PC-3 (cell line): ENCODE measurements at regions of chr11 and their contacts with region 1.

Region 1: DNA sequence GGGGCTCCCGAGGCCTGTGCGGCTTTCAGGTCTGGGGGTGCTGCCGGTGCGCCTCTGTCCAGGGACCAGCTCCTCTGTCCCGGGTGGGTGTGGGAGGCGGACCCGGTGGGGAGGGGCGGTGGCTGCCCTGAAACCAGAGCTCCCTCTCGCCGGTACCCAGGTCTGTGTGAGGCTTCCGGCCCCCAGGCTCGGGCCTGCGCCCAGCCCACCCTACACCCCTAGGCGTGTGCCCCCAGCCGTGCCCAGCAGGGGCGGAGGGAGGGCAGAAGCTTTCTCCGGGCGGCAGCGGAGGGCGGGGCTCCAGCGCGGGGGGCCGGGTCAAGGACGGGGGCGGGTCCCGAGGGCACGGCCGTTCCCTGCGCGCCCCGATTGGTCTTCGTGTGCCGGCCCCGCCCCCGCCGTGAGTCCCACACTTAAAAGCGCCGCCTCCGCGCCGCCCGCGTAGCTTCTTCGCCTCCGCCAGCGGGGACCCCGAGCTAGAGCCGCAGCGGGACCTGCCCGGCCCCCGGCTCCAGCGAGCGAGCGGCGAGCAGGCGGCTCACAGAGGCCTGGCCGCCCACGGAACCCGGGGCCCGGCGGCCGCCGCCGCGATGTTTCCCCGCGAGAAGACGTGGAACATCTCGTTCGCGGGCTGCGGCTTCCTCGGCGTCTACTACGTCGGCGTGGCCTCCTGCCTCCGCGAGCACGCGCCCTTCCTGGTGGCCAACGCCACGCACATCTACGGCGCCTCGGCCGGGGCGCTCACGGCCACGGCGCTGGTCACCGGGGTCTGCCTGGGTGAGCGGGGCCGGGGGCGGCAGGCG is 616 bp downstream of the PNPLA2 start:
- DNase-seq: peak; percentile 80
- ATAC-seq: peak; percentile 59
- H3K4me3 ChIP-seq: peak overlapping the region; percentile 89
- H3K27ac ChIP-seq: peak overlapping the region; percentile 30; the same call in 1 of the 2 replicates
- H3K4me1 ChIP-seq: peaks cover 26% of the 10 kb centered on the region
- H3K27me3 ChIP-seq: no peaks in the 10 kb centered on the region
- CTCF ChIP-seq: no peak

Region 2: DNA sequence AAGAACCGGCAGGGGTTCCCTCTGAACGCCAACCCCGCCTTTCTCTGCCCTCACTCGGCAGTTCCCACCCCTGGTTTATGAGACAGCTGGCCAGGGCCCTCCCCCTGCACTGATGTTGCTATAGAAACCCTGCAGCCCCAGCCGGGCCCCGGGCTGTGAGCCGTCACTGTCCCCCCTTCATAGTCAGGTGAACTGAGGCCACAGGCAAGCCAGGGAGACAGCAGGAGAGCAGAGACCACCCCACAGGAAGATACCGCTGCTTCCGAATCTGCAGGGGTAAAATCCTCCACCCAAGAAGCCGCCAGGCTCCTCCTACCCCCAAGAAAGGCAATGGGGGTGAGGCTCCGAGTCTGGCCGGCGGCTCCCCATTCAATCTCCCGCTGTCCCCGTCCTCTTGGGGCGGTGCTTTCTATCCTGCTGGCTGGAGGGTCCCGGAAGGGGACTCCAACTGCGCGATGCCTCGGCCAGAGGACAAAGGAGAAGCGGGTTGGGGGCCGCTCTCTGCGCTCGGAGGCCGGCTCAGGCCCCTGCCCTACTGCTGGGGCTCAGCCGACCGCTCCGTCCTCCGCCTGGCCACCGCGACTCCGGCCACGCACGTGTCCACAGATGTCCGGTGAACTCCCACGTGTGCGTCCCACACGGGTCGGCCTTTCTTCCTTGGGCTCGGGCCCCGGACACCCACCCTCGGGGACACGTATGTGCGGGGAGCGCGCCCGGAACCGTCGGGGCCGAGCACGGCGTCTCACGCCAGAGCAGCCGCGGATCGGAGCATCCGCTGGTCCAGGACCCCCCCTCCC is 21.8 kb before region 1 on chr11:
- CTCF ChIA-PET with region 1: no interaction called
- POLR2A ChIA-PET with region 1: no interaction called
- intact Hi-C with region 1: loop called (anchors 2 kb)
- DNase-seq: peak; percentile 55
- ATAC-seq: peak; percentile 34
- H3K4me3 ChIP-seq: peak overlapping the region; percentile 94
- H3K27ac ChIP-seq: peak overlapping the region; percentile 48
- H3K4me1 ChIP-seq: peaks cover 19% of the 10 kb centered on the region
- H3K27me3 ChIP-seq: no peaks in the 10 kb centered on the region
- CTCF ChIP-seq: no peak

Region 3: DNA sequence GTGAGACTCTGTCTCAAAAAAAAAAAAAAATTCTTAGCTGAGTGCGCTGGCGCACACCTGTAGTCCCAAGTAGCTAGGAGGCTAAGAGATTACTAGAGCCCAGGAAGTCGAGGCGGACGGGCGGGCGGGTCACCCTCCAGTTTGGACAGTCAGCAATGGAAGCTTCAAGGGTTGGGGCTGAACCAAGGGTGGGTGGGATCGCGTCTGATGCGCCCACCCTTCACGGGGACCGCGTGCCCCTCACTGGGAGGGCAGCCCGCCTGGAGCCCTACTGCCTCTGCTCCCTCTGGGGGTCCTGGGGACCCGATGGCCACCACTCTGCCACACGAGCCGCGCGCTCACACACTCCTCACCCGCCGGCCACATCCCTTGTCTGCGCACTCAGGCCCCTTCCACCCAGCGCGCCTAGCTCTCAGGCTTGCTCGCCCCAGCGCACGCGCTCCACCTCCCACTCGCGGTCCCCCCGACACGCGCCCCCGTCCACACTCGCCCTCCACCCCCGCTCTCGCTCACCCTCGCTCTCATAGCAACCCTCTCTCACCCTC is 90.8 kb after region 1 on chr11:
- CTCF ChIA-PET with region 1: no interaction called
- POLR2A ChIA-PET with region 1: interaction called, 19 read pairs
- intact Hi-C with region 1: no loop called
- DNase-seq: no peak
- ATAC-seq: peak; percentile 12
- H3K4me3 ChIP-seq: peak overlapping the region; percentile 99
- H3K27ac ChIP-seq: peak overlapping the region; percentile 50
- H3K4me1 ChIP-seq: peaks cover 16% of the 10 kb centered on the region
- H3K27me3 ChIP-seq: no peaks in the 10 kb centered on the region
- CTCF ChIP-seq: no peak

Region 4: DNA sequence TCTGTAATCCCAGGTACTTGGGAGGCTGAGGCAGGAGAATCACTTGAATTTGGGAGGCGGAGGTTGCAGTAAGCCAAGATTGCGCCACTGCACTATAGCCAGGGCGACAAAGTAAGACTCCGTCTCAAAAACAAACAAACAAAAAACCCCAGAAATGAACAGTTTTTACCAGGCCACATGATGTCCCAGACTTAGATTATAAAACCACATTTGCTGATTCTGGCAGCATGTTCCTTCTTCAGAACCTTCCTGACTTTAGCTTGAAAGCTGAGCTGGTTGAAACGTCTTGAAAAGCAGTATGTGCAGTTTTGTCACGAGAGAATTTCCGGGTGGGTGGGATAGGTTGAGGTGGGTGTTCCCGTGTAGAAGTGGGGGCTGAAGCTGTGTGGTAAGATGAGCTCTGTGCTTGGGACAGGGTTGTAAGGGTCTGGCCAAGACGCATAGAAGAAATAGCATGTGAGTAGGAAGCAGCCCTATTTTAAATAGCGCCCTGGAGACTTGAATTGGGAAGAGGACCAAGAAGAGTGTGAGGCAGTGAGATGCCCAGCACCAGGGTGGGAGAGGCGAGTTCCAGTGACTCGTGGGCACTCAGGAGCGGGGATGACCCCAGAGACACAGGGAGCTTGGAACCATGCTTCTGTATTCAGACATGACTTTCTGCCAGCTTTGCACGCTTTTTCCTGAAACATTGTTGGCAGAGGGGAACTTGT is 114.0 kb after region 1 on chr11:
- CTCF ChIA-PET with region 1: no interaction called
- POLR2A ChIA-PET with region 1: no interaction called
- intact Hi-C with region 1: no loop called
- DNase-seq: no peak
- ATAC-seq: no peak
- H3K4me3 ChIP-seq: no peak overlapping the region
- H3K27ac ChIP-seq: no peak overlapping the region
- H3K4me1 ChIP-seq: no peaks in the 10 kb centered on the region
- H3K27me3 ChIP-seq: no peaks in the 10 kb centered on the region
- CTCF ChIP-seq: no peak